ENCODE measurements at regions of chr13 and their contacts with region 1.

Region 1: GRCh38 chr13:100514788-100515409 is 73.7 kb downstream of the GGACT start:
- DNase-seq: no peak
- H3K4me3 ChIP-seq: no peak overlapping the region
- H3K27ac ChIP-seq: no peak overlapping the region
- H3K4me1 ChIP-seq: peaks cover 0 to 12% (median 4%) of the 10 kb centered on the region in 4 donors
- H3K27me3 ChIP-seq: no peaks in the 10 kb centered on the region
- CTCF ChIP-seq: peak; percentile 79 to 90 (median 80)
- EP300 ChIP-seq: no peak
- POLR2A ChIP-seq: no peak

Region 2: DNA sequence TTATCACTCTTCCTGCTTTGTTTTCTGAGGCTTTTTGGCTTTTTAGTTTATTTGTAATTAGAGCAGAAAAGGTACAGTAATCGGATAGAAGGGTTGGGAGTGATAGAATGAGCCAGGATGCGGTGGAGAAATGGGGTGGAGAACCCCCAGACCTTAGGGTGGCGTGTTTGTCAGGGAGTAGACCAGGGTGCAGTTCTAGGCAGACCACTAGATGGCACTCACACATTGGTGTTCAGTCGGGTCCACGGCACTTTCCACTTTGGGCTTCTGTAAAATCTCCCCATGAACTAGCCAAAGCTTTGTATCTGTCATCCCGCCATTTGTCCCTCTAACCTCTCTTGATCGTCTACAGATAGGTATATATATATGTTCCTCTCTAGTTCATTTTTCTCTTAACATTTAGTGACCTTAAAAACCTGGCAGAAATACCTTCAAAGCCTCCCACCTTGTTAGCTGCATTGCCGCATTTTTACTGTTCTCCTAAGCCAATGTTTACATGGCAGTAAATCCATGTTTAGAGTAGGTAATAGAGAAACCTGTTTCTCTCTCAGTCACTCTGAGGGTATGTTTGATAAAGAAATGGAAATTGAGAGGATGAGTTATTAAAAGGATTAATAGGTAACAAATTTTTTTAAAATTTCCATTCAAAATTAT is 858.7 kb before region 1 on chr13:
- intact Hi-C with region 1: loop called (anchors 5 kb)
- DNase-seq: peak; percentile 94
- H3K4me3 ChIP-seq: peak overlapping the region in 1 of 4 donors; percentile 9
- H3K27ac ChIP-seq: no peak overlapping the region
- H3K4me1 ChIP-seq: peaks cover 9 to 30% (median 27%) of the 10 kb centered on the region in 4 donors
- H3K27me3 ChIP-seq: no peaks in the 10 kb centered on the region
- CTCF ChIP-seq: peak; percentile 85 to 93 (median 92)
- EP300 ChIP-seq: no peak
- POLR2A ChIP-seq: no peak

Region 3: DNA sequence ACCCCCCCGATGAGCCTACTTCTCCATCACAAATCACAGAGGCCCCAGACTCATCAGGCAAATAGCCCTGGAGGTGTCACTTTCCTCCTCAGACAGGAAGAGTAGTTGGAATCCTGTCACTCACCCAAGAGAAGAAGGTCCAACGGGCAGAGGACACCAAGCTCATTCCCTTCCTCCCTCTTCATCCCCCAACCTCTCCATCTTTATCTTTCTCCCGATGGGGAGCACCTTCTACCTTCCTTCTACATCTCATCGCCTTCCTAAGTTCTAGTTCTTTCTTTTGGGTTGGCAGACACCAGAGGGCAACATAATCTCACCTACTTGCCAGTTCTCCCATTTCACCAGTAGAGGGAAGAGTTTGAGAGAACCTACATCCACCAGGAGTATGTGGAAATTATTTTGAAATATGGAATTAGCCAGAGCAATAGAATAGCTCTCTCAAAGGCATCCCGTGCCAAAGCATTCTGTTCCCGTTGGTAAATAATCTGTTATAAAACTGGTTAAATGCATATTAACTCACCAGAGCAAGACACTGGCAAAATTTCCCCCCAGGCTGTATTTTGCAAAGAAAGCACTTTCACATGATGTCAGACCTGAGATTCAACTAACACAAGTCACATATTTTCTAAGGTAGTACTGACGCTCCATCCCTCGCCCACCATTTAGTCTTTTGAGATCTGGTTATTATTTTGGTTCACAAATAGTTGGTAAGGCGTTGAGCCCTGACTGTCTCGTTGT is 598.4 kb before region 1 on chr13:
- intact Hi-C with region 1: loop called (anchors 10 kb)
- DNase-seq: no peak
- H3K4me3 ChIP-seq: no peak overlapping the region
- H3K27ac ChIP-seq: no peak overlapping the region
- H3K4me1 ChIP-seq: no peaks in the 10 kb centered on the region
- H3K27me3 ChIP-seq: peaks cover 0 to 47% (median 8%) of the 10 kb centered on the region in 4 donors
- CTCF ChIP-seq: peak; percentile 68 to 76 (median 73)
- EP300 ChIP-seq: no peak
- POLR2A ChIP-seq: no peak